ENCODE measurements at regions of chr5 and their contacts with region 1.

Region 1: GRCh38 chr5:131382407-131383395 is 118.8 kb downstream of the CDC42SE2 start:
- DNase-seq: peak; percentile 66
- H3K4me3 Mint-ChIP-seq: peak overlapping the region; percentile 61
- H3K27ac Mint-ChIP-seq: peak overlapping the region; percentile 99
- H3K4me1 Mint-ChIP-seq: peaks cover 93% of the 10 kb centered on the region
- H3K27me3 Mint-ChIP-seq: no peaks in the 10 kb centered on the region

Region 2: DNA sequence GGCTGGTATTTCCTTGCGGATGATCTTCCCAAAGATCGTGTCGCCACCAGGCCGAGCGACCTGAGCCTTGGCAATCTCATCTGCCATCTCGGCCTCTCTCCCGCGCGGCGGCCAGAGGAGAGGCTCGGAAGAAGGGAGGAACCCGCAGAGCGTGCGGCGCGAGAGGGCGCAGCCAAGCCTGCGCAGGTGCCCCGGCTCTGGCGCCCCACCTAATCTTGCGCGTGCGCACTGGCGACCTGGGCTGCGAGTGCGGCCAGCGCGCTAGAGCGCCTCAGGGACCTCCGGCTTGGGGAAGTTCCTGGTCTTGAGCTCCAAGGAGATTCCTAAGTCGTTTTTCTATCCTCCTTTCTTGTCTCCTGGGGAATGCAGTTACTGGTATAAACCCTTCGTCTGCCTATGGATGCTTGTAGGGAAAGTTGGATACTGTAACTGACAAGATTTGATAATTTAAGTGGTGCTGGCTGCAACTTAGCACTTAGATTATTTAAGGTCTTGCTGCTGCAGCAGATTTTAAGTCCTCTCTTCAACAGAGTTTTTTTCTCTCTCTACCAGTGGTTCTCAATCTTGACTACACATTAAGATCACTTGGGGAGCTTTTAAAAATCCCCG is 217.5 kb before region 1 on chr5 and contains the start of gene HINT1:
- intact Hi-C with region 1: loop called (anchors 1 kb)
- DNase-seq: peak; percentile 93
- H3K4me3 Mint-ChIP-seq: peak within 1 kb of the TSS; percentile 99
- H3K27ac Mint-ChIP-seq: peak within 1 kb of the TSS; percentile 99
- H3K4me1 Mint-ChIP-seq: peaks cover 55% of the 10 kb centered on the region
- H3K27me3 Mint-ChIP-seq: peaks cover 2% of the 10 kb centered on the region
- total RNA-seq, gene HINT1: 249 and 262 TPM in 2 replicates

Region 3: DNA sequence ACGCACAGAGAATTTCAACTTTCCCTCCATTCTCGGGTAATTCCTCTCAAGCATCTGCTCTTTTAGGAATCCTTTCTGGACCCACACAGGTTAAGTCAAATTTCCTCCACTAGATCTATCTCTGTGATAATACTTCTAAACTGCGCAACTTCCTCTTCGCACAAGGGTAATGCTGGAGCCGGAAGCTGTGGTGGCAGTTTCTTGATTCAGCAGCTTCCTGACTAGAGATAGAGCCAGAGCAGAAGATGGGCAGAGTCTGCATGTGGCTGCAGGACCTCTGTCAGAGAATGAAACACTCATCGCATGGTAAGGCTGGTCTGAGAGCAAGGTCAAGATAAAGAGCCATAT is 129.9 kb before region 1 on chr5:
- intact Hi-C with region 1: loop called (anchors 1 kb)
- DNase-seq: peak; percentile 78
- H3K4me3 Mint-ChIP-seq: peak overlapping the region; percentile 89
- H3K27ac Mint-ChIP-seq: peak overlapping the region; percentile 99
- H3K4me1 Mint-ChIP-seq: peaks cover 69% of the 10 kb centered on the region
- H3K27me3 Mint-ChIP-seq: no peaks in the 10 kb centered on the region

Region 4: GRCh38 chr5:131281133-131281867 is 101.4 kb before region 1 on chr5:
- intact Hi-C with region 1: loop called (anchors 1 kb)
- DNase-seq: no peak
- H3K4me3 Mint-ChIP-seq: peak overlapping the region; percentile 86
- H3K27ac Mint-ChIP-seq: peak overlapping the region; percentile 91
- H3K4me1 Mint-ChIP-seq: peaks cover 78% of the 10 kb centered on the region
- H3K27me3 Mint-ChIP-seq: peaks cover 5% of the 10 kb centered on the region

Region 5: GRCh38 chr5:131357739-131358561 is 24.8 kb before region 1 on chr5:
- intact Hi-C with region 1: loop called (anchors 1 kb)
- DNase-seq: peak; percentile 26
- H3K4me3 Mint-ChIP-seq: peak overlapping the region; percentile 37
- H3K27ac Mint-ChIP-seq: peak overlapping the region; percentile 88
- H3K4me1 Mint-ChIP-seq: peaks cover 46% of the 10 kb centered on the region
- H3K27me3 Mint-ChIP-seq: no peaks in the 10 kb centered on the region

Region 6: DNA sequence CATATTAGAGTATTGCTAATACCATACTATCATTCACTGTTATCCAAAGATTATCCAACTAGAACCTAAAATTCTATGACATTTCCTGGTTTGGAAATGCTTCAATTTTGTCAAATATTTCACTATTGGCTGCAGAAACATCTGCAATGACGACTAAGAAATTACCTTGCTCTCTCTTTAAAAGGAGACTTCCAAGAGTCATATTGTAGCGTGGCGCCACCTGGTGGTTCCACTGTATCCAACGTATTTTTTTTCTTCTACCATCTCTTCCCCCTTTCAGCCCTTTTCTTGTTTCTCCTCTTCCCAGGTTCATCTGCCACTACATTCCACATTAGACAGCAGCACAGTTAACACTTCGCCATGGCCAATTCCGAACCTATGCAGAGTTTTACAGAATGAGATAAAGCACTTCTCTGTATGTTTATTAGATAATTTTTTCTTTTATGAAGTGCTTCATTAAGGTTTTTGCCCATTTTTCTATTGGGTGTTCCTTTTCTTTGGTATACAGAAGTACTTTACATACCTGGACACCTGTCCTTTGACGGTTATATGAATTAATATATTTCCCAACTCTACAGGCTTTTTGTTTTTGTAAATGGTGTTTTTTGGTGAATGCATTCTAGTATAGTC is 34.7 kb after region 1 on chr5:
- intact Hi-C with region 1: loop called (anchors 1 kb)
- DNase-seq: peak; percentile 65
- H3K4me3 Mint-ChIP-seq: peak overlapping the region; percentile 32
- H3K27ac Mint-ChIP-seq: peak overlapping the region; percentile 59
- H3K4me1 Mint-ChIP-seq: peaks cover 37% of the 10 kb centered on the region
- H3K27me3 Mint-ChIP-seq: no peaks in the 10 kb centered on the region